Lower leg skin (tissue), 4 donors: ENCODE measurements at regions of chr22 and their contacts with region 1.

Region 1: GRCh38 chr22:28019881-28020871 is 101.1 kb upstream of the PITPNB start:
- DNase-seq: peak; percentile 64 to 95
- H3K4me3 ChIP-seq: no peak overlapping the region
- CTCF ChIP-seq: peak in 1 of 3 donors; percentile 81
- POLR2A ChIP-seq: no peak

Region 2: DNA sequence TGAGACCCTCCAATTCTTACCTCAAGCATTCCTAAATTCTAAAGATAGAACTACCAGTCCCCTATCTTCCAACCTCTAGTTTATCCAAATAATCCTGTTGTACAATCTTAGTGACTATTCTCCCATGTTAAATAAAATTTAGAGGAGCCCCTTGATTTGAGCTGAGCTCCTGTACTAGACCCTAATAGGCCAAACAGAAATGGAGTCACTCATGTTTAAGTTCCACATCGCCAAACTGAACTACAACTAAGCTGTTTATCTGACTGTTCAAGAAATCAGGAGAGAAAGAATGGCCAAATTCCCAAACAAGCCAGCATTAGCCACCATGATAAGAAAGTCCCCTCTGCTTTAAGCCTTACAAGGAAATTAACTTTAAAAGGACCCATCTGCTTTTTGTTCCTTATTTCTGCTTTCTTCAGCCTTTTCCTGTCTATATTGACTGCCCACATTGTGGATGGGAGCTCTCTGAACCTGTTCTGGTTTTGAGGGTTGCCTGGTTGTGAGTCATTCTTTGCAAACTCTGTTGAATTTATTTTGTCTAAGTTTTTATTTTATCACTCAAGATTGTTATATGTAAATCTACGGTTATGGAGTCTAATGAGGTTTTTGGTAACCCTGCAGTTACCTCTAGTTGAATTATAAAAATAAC is 569.0 kb after region 1 on chr22:
- intact Hi-C with region 1: loop called (anchors 5 kb)
- DNase-seq: no peak
- H3K4me3 ChIP-seq: no peak overlapping the region
- CTCF ChIP-seq: no peak
- POLR2A ChIP-seq: no peak